Right ventricle myocardium superior (tissue), 1 donor: ENCODE measurements at regions of chr11 and their contacts with region 1.

Region 1: DNA sequence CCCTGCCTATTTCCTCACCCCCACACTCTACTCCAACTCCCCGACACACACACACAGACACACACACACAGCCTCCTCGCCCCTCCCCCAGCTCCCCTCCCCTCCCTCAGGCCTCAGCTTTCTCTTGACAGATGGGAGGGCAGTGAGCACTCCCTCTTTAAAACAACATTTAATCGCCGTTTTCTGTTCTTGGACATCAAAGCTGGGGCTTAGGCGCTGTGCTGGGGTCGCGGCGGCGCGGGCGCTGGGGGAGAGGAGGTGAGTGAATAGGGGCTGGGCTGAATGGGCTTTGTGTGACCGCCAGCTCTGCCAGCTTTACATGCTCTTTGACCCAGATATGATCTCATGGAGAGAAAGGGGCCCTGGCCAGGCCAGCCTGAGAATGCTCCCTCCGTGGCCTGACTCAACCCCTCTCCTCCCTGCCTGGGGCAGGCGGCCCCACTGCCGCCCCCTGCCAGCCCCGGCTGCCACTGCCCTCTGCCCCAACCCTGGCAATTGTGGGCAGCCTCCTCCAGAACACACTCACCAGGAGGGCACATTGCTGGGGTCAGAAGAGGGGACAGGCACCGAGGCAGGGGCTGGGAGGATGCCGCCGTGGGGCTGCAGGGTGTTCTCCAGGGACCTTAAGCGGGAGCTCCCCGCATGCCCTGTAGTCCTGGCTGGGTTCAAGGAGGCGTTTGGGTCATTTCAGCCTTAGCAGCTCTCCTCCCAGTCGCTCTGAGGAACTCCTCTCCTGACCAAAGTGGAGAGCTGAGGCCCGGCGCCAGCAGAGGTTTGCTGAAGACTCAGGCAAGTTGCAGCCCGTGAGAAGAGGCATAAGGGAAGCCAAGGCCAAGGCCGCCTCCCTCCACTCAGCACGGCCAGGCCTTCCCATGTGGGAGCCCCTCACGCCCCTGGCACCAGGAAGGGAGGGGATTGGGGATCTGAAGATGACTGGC is 38.3 kb upstream of the NNMT start:
- DNase-seq: peak; percentile 86
- ATAC-seq: peak; percentile 42

Region 2: DNA sequence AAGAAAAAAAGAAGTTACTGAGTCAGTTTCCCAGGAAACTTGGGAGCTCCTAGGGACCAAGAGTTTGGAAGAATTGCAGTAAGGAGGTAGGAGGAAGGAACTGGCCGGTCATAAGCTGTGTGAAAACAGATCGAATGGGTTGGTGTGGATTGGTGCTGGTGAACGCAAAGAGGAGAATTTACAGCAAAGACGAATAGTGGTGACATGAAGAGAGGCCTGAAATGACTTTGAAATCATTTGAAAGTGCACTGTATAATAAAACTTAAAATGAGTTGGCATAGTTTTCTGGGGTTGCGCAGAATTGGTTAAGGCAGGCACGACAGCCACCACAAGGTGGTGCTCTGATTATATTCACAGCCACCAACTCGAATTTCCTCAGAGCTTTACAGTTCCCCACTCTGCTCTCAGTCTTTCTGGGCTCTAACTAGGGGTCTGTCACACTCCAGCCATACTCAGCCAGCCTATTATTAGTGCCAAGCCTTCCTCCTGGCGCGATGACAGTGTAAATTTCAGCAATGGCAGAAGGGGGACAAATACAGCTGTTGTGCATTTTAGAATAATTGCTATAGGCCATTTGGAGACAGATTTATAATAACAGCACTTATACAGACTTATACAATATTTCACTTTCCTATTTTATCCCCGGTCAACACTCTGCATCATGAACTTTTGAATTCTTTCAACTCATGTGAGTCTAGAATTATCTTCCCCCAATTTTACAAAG is 361.6 kb before region 1 on chr11:
- intact Hi-C with region 1: loop called (anchors 2 kb)
- DNase-seq: peak; percentile 53
- ATAC-seq: peak; percentile 84

Region 3: GRCh38 chr11:113994077-113994954 is 263.6 kb before region 1 on chr11:
- intact Hi-C with region 1: loop called (anchors 2 kb)
- DNase-seq: no peak
- ATAC-seq: peak; percentile 66

Region 4: GRCh38 chr11:114036156-114036811 is 221.6 kb before region 1 on chr11:
- intact Hi-C with region 1: loop called (anchors 2 kb)
- DNase-seq: peak; percentile 92
- ATAC-seq: peak; percentile 95

Region 5: GRCh38 chr11:114180301-114181055 is 77.4 kb before region 1 on chr11:
- intact Hi-C with region 1: loop called (anchors 5 kb)
- DNase-seq: peak; percentile 45
- ATAC-seq: peak; percentile 47